WTC11 (cell line): ENCODE measurements at regions of chr13 and their contacts with region 1.

Region 1: DNA sequence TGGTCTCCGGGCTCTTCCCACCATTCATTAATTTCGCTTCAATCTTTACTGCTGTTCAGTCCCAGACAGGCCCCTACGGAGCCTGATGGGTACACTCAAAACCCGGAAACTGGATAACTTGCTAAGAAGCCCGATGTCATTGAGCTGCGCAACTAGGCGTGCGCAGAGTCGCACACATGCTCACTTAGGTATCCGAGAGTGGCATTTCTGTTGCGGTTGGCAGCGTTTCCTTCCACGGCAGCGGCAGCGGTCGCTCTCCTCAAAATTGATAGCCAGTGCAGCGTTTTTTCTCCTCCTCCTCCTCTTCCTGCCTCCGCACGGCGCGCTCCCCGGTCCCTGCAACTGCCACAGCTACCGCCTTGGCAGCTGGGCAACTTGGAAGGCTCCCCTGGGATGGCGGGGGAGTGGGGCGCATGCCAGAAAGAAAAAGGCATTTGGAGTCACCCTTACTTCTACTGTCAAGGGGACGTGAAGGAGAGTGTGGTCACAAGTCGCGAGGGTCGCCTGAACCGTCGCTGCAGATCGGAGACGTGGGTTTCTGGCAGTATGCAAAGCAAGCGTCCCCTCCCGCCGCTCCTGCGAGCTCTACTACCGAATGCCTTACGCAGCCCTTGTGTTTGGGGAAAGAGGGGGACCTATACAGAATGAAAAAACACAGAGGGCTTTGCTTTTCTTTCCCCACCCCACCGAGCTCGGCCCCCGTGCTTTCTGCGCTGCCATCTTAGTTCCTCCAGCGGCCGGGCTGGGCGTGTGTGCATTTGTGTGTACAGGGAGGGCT is 2.4 kb upstream of the MYCBP2 start:
- DNase-seq: peak; percentile 62
- ATAC-seq: peak; percentile 62
- H3K4me3 Mint-ChIP-seq: peak overlapping the region; percentile 92
- H3K27ac Mint-ChIP-seq: peak overlapping the region; percentile 90
- H3K4me1 Mint-ChIP-seq: peaks cover 43% of the 10 kb centered on the region
- H3K27me3 Mint-ChIP-seq: peaks cover 25% of the 10 kb centered on the region
- CTCF ChIP-seq: no peak

Region 2: DNA sequence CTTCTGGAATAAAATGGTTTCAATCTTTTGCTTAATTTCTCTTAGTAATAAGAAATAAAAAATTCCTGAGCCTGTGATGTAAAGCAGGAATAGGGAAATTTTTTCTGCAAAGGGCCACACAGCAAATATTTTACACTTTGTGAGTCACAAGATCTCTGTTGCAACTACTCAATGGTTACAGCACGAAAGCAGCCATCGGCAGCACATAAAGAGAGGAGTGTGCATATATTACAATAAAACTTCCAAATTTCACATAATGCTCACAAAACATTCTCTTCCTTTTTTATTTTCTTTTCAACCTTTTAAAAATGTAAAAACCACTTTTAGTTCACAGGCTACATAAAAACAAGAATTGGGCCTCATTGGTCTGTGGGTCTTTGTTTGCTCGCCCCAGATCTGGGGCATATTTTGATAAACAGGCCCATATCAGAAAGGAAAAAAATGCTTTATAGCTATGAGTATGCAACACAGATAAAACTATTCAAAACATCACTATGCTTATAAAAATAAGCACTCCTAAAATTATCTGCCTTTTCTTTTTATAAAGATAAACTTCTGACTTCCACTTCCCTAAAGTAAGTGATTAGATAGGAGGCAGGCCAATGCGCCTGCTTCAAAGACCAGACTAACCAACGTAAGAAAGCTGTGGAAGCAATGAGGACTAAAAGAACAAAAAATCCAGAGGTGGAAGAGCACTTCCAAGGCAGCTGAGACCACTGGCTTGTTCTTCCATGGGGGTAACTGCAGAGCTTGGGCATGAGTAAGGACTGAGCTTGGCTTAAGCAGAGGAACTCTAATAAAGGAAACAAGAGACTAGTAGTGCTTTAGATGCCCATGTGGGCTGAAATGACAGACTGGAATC is 28.9 kb before region 1 on chr13:
- CTCF ChIA-PET with region 1: no interaction called
- POLR2A ChIA-PET with region 1: no interaction called
- DNase-seq: no peak
- ATAC-seq: peak; percentile 47; the same call in 1 of the 2 replicates
- H3K4me3 Mint-ChIP-seq: no peak overlapping the region
- H3K27ac Mint-ChIP-seq: peak overlapping the region; percentile 83
- H3K4me1 Mint-ChIP-seq: peaks cover 48% of the 10 kb centered on the region
- H3K27me3 Mint-ChIP-seq: no peaks in the 10 kb centered on the region
- CTCF ChIP-seq: no peak

Region 3: GRCh38 chr13:77316430-77316829 is 12.9 kb before region 1 on chr13:
- CTCF ChIA-PET with region 1: interaction called, 23 read pairs
- POLR2A ChIA-PET with region 1: interaction called, 3 read pairs
- DNase-seq: no peak
- ATAC-seq: no peak
- H3K4me3 Mint-ChIP-seq: no peak overlapping the region
- H3K27ac Mint-ChIP-seq: no peak overlapping the region
- H3K4me1 Mint-ChIP-seq: peaks cover 52% of the 10 kb centered on the region
- H3K27me3 Mint-ChIP-seq: no peaks in the 10 kb centered on the region
- CTCF ChIP-seq: no peak

Region 4: DNA sequence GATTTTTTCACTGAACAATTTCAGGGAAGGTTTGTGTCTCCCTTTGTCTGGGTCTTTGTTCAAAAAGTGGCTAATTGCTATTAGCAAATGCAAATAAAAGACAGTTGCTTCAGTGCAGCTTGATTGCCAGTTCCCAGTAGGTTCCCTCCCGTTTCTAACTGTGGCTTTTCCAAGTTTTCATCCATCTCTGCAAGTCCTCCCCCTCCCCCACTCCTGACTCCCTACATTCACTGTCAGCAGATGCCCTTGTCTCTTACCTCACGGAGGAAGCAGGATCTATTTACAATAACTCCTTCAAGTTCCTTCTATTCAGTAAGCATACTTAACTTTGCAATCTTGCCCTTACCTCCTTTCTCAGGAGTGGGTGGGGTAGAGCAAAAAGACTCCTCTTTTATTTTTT is 150.7 kb after region 1 on chr13:
- CTCF ChIA-PET with region 1: interaction called, 15 read pairs
- POLR2A ChIA-PET with region 1: no interaction called
- DNase-seq: no peak
- ATAC-seq: peak; percentile 22; the same call in 1 of the 2 replicates
- H3K4me3 Mint-ChIP-seq: peak overlapping the region; percentile 6; the same call in 1 of the 2 replicates
- H3K27ac Mint-ChIP-seq: no peak overlapping the region; the same call in 1 of the 2 replicates
- H3K4me1 Mint-ChIP-seq: peaks cover 35% of the 10 kb centered on the region
- H3K27me3 Mint-ChIP-seq: no peaks in the 10 kb centered on the region
- CTCF ChIP-seq: no peak